IMR-90 (cell line): ENCODE measurements at regions of chr5 and their contacts with region 1.

Region 1: GRCh38 chr5:98905857-98906690 is 22.7 kb downstream of the CHD1 start:
- DNase-seq: peak; percentile 59
- ATAC-seq: peak; percentile 77
- H3K4me3 ChIP-seq: no peak overlapping the region
- H3K27ac ChIP-seq: no peak overlapping the region
- H3K4me1 ChIP-seq: peaks cover 2% of the 10 kb centered on the region
- H3K27me3 ChIP-seq: no peaks in the 10 kb centered on the region
- CTCF ChIP-seq: peak; percentile 73
- POLR2A ChIP-seq: no peak
- RAD21 ChIP-seq: peak; percentile 74

Region 2: DNA sequence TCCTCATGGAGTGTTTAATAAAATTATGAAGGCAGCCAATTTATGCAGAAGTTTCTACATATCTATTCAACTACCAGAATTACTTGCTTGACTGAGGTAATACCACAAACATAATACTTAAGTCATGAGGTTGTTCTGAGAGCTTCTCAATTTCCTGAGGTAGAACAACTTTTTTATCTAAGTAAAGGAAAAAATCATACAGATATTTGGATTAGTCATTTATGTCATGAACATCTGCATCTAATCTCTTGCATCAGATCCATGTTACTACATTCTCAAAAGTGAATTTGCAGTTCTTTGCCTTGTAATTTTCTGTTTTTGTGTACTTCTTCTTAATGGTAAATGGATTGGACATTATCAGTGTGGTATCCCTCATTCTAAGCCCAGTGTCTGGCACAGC is 193.0 kb before region 1 on chr5:
- CTCF ChIA-PET with region 1: no interaction called
- POLR2A ChIA-PET with region 1: no interaction called
- dilution Hi-C with region 1: no loop called
- in situ Hi-C with region 1: no loop called
- intact Hi-C with region 1: no loop called
- DNase-seq: peak; percentile 77
- ATAC-seq: no peak; the same call in 1 of the 2 replicates
- H3K4me3 ChIP-seq: no peak overlapping the region
- H3K27ac ChIP-seq: no peak overlapping the region
- H3K4me1 ChIP-seq: no peaks in the 10 kb centered on the region
- H3K27me3 ChIP-seq: no peaks in the 10 kb centered on the region
- CTCF ChIP-seq: no peak
- POLR2A ChIP-seq: no peak
- RAD21 ChIP-seq: no peak

Region 3: DNA sequence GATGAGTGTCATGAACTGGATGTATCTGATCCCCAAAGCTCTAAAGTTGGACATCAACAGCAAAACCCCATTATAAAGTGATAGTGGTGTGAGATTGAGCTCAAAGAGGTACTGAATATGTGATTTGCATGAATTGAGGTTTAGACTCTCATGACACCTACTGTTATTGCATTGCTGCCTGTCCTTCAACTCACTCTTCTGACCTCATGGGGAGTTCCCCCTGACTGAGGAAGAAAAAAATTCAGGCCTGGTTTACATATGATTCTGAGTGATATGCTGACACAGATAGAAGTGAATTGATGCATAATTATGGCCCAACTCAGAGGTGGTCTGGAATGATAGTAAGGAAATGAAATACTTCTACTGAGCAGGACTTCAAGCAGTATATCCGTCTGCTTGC is 98.9 kb after region 1 on chr5:
- CTCF ChIA-PET with region 1: no interaction called
- POLR2A ChIA-PET with region 1: no interaction called
- dilution Hi-C with region 1: no loop called
- in situ Hi-C with region 1: no loop called
- intact Hi-C with region 1: no loop called
- DNase-seq: no peak
- ATAC-seq: no peak
- H3K4me3 ChIP-seq: no peak overlapping the region
- H3K27ac ChIP-seq: no peak overlapping the region
- H3K4me1 ChIP-seq: no peaks in the 10 kb centered on the region
- H3K27me3 ChIP-seq: no peaks in the 10 kb centered on the region
- CTCF ChIP-seq: no peak
- POLR2A ChIP-seq: no peak
- RAD21 ChIP-seq: no peak

Region 4: DNA sequence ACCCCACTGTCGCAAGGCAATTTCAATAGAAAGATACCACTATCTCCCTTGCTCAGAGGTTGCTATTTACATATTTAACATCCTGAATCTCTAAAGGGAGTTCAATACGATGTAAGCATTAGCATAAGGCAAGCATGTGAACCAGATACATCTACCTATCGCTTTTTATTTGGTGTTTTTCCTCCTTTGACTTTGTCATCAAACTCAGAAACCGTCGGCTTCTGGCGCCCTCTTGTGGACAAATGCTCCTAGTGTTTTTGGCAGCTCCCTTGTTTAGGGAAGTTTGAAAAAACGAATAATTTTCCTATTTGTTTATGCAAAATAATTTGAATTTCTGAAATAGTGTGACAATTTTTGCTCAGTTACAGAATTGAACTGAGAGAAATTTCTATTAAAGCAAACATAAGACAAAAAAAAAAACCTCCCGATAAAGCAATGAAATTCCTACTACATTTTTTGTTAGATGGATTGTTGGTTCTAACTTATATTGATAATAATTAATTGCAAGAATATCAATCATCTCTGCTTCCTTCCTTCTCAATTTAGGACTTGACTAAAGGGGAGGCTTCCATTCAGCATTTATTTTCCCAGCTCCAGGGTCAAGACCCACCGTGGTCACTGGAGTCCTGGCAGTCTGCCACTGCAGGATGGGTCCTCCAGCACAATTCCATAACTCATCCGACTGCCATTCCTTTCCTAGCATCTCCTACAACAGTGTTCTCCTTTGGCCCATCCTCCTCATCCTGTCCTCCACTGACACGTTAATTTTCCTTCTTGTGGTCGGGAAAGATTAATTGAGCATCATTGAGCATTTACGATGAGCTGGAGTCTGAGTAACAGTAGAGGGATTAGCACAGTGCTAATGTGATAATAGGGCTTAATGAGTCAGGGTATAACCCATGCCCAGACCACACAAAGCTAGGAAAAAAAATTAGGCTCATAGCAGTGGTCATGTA is 154.5 kb after region 1 on chr5:
- CTCF ChIA-PET with region 1: interaction called, 6 read pairs
- POLR2A ChIA-PET with region 1: no interaction called
- dilution Hi-C with region 1: no loop called
- in situ Hi-C with region 1: no loop called
- intact Hi-C with region 1: loop called (anchors 1 kb)
- DNase-seq: peak; percentile 65
- ATAC-seq: 0 out of 2 replicates have a peak, but pooled peaks have one; percentile 30
- H3K4me3 ChIP-seq: no peak overlapping the region
- H3K27ac ChIP-seq: no peak overlapping the region
- H3K4me1 ChIP-seq: peaks cover 7% of the 10 kb centered on the region
- H3K27me3 ChIP-seq: no peaks in the 10 kb centered on the region; the same call in 1 of the 2 replicates
- CTCF ChIP-seq: peak; percentile 85
- POLR2A ChIP-seq: no peak
- RAD21 ChIP-seq: peak; percentile 73